Activated CD4-positive, alpha-beta T cell treated with anti-CD3 and anti-CD28 coated beads for 36 hours (primary cell): ENCODE measurements at regions of chr3 and their contacts with region 1.

Region 1: DNA sequence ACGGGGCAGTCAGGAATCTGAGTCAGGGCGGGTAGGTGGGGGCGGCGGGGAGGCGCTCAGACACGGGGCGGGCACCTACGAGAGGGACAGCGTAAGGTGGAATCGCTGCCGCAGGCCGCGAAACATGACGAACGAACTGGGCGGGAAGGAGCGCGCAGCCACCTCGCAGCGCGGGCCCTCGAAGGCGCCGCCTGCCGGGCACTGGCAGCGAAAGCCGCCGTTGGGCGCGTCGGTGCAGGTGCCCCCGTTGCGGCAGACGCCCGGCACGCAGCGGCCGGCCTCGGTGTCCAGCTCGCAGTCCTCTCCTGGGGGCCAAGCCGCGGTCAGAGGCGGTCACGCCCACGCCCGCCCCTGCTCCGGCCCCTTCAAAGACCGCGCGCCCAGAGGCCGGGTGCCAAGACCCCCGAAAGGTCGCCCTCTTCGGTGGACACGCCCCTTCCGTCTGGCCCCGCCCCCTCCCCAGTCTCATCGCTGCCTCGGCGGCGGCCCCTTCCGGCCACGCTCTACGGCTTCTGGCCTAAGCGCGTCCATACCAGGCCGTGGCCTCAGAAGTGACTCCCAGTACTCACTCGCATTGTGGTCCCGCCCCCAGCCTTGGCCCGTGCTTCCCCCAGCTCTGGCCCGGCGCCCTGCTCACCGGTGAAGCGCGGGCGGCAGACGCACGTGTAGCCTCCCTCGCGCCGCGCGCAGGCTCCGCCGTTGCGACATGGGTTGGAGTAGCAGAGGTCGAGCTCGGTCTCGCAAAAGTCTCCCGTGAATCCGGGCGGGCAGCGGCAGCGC is 6.4 kb downstream of the CELSR3 start:
- DNase-seq: peak; percentile 94
- ATAC-seq: peak; percentile 83
- H3K4me3 Mint-ChIP-seq: peak overlapping the region; percentile 71
- H3K27ac Mint-ChIP-seq: peak overlapping the region; percentile 87
- H3K4me1 Mint-ChIP-seq: peaks cover 6% of the 10 kb centered on the region
- H3K27me3 Mint-ChIP-seq: peaks cover 16% of the 10 kb centered on the region

Region 2: GRCh38 chr3:48001991-48002390 is 654.3 kb before region 1 on chr3:
- CTCF ChIA-PET with region 1: no interaction called
- POLR2A ChIA-PET with region 1: no interaction called
- intact Hi-C with region 1: no loop called
- DNase-seq: peak; percentile 17
- ATAC-seq: no peak
- H3K4me3 Mint-ChIP-seq: no peak overlapping the region
- H3K27ac Mint-ChIP-seq: no peak overlapping the region
- H3K4me1 Mint-ChIP-seq: peaks cover under 1% of the 10 kb centered on the region
- H3K27me3 Mint-ChIP-seq: no peaks in the 10 kb centered on the region

Region 3: DNA sequence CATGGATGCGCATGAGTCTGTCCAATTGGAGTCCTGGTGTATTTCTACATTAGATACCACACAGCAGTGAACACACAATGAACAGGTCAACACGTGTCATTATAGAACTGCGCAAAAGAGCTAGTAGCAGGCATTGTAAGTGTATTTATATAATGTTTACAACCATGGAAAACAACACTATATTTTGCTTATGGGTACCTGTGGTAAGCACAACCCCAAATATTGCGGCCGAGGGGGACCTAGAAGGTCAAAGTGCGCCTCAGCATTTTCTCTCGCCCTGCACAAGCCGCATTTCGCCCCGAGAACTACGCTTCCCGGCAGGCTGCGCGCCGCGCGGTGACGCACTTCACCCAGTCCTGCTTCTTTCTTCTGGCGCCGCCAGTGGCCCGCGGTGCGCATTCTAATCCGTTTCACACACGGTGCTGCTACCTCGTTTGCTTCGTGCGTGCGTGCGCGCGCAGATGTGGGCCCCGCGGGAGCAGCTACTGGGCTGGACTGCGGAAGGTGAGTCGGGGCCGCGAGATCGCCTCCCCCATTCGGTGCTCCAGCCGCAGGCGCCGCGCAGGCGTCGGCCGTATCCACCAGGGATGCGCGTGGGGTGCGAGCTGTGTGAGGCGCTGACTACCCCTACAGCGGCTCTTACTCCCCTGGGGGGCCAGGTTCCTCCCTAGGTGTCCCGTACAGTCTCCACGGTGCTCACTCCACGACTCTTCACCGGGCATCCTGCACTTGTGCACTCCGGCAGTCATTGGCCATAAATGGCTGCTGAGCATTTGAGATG is 415.4 kb before region 1 on chr3 and contains the start of gene ZNF589:
- CTCF ChIA-PET with region 1: no interaction called
- POLR2A ChIA-PET with region 1: no interaction called
- intact Hi-C with region 1: loop called in 1 of 2 experiments (anchors 2 kb)
- DNase-seq: peak; percentile 97
- ATAC-seq: peak; percentile 99
- H3K4me3 Mint-ChIP-seq: peak within 1 kb of the TSS; percentile 87
- H3K27ac Mint-ChIP-seq: peak within 1 kb of the TSS; percentile 84
- H3K4me1 Mint-ChIP-seq: peaks cover 26% of the 10 kb centered on the region
- H3K27me3 Mint-ChIP-seq: no peaks in the 10 kb centered on the region
- total RNA-seq, gene ZNF589: 28.6 to 29.6 TPM

Region 4: DNA sequence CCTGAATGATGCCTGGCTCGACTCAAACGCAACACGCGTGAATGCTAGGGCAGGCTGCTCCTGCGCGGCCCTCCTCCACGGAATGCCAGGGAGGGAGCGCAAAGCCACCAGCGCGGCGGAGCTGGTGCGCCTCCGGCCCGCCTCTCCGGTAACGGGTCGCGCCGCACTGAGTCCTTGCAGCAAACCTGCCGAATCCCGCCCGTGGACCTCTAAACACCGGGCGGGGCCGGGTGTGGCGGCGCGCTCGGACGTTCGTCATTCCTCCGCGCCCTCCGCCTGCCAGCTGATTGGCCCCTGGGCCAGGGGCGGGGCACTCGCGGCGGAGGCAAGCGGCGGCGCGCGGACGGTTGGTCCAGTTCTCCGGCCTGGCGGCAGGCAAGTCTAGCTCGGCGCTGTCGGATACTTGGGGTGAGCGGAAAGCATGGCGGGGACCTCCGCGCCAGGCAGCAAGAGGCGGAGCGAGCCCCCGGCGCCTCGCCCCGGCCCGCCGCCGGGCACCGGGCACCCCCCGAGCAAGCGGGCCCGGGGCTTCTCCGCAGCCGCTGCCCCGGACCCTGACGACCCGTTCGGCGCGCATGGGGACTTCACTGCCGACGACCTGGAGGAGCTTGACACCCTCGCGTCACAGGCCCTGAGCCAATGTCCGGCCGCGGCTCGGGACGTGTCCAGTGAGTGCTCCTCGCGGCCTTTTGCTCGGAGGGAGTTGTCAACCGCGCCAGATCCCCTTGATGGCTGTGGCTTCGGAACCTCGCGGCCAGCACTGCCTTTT is 209.6 kb before region 1 on chr3 and contains the start of gene ATRIP:
- CTCF ChIA-PET with region 1: no interaction called
- POLR2A ChIA-PET with region 1: no interaction called
- intact Hi-C with region 1: loop called in 1 of 2 experiments (anchors 2 kb)
- DNase-seq: peak; percentile 91
- ATAC-seq: peak; percentile 98
- H3K4me3 Mint-ChIP-seq: peak within 1 kb of the TSS; percentile 83
- H3K27ac Mint-ChIP-seq: peak within 1 kb of the TSS; percentile 79
- H3K4me1 Mint-ChIP-seq: peaks cover 42% of the 10 kb centered on the region
- H3K27me3 Mint-ChIP-seq: no peaks in the 10 kb centered on the region
- total RNA-seq, gene ATRIP: 16.8 to 21.0 TPM

Region 5: GRCh38 chr3:48609088-48610005 is 46.9 kb before region 1 on chr3 and contains the start of gene UQCRC1:
- CTCF ChIA-PET with region 1: no interaction called
- POLR2A ChIA-PET with region 1: no interaction called
- intact Hi-C with region 1: loop called in 1 of 2 experiments (anchors 1 kb)
- DNase-seq: peak; percentile 96
- ATAC-seq: peak; percentile 96
- H3K4me3 Mint-ChIP-seq: peak within 1 kb of the TSS; percentile 97
- H3K27ac Mint-ChIP-seq: peak within 1 kb of the TSS; percentile 95
- H3K4me1 Mint-ChIP-seq: peaks cover 27% of the 10 kb centered on the region
- H3K27me3 Mint-ChIP-seq: no peaks in the 10 kb centered on the region
- total RNA-seq, gene UQCRC1: 205 to 231 TPM

Region 6: GRCh38 chr3:48685602-48686511 is 29.6 kb after region 1 on chr3 and contains the start of gene NCKIPSD:
- CTCF ChIA-PET with region 1: interaction called, 5 read pairs
- POLR2A ChIA-PET with region 1: no interaction called
- intact Hi-C with region 1: loop called in 1 of 2 experiments (anchors 1 kb)
- DNase-seq: peak; percentile 96
- ATAC-seq: peak; percentile 94
- H3K4me3 Mint-ChIP-seq: peak within 1 kb of the TSS; percentile 82
- H3K27ac Mint-ChIP-seq: peak within 1 kb of the TSS; percentile 68
- H3K4me1 Mint-ChIP-seq: peaks cover 16% of the 10 kb centered on the region
- H3K27me3 Mint-ChIP-seq: no peaks in the 10 kb centered on the region
- total RNA-seq, gene NCKIPSD: 61.0 to 67.3 TPM